Ovary (tissue), 10 donors: ENCODE measurements at regions of chr1 and their contacts with region 1.

Region 1: DNA sequence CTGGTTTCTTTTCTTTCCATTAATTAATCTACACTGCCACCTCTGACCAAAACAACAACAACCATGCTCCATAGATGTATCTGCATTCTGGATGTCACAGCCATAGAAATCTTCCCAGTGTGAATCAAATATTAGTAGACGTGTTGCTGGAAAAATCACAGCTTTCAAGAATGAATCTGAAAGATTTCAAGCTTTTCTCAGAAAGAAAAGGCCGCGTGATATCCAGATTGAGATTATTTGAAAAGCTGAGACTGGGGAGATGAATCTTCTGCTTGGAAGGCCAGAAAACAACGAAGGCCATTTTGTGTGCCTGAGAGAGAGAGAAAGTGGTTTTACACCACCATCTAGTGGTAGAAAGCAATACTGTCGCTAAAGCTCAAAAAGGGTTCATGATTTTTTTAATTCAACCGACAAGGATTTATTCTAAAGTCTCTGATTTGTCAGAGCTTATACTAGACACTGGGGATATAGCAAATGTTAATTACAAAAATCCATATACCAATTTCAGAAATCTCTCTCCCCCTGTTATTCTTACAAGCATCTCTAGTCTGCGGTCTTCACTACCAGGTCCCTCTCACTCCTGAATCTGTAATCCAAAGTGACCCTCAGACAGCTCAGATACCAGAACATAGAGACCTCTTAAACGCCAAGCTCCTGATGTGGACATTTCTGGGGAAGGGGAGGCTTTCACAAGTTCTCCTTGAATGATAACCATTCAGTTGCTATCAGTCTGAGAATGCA is 87.5 kb upstream of the SGIP1 start:
- DNase-seq: no peak
- H3K4me3 ChIP-seq: no peak overlapping the region
- H3K27ac ChIP-seq: no peak overlapping the region
- H3K4me1 ChIP-seq: no peaks in the 10 kb centered on the region
- H3K27me3 ChIP-seq: no peaks in the 10 kb centered on the region
- CTCF ChIP-seq: peak; percentile 70 to 81 (median 78)
- EP300 ChIP-seq: no peak
- POLR2A ChIP-seq: no peak

Region 2: DNA sequence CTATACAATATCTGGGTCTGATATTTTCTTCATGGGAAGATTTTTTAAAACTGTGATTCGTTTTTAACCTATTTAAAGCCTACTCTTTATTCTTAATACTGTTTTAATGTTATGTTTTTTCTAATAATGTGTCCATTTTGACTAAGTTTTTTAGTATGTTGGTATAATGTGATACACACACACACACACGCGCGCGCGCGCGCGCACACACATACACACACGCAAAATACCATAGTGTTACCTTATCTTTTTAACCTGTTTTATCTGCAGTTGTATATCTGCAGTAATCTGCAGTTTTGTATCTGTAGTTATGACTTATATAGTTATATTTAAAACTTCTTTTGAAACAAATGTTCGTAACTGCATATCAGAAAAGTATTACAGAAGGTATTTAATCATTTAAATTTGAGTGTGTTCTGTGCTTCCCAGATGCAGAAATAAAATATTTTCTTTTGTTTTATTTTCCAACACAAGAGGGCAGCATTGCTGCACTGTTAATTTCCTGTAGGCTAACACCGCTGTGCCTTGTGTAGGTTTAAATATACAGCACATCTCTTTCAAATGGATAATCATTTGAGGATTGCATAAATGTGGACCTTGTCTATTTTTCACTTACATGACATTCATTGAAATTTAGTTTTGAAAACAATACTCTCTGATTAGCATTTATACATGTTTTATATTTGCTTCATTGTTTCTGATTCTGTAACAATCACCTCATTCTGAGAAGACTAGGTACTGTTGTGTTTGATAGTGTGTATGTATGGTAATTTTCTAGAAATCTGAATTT is 487.7 kb before region 1 on chr1:
- intact Hi-C with region 1: loop called in 2 of 4 experiments (anchors 5 to 10 kb)
- DNase-seq: no peak
- H3K4me3 ChIP-seq: no peak overlapping the region
- H3K27ac ChIP-seq: no peak overlapping the region
- H3K4me1 ChIP-seq: no peaks in the 10 kb centered on the region
- H3K27me3 ChIP-seq: no peaks in the 10 kb centered on the region
- CTCF ChIP-seq: peak; percentile 30 to 74 (median 56)
- EP300 ChIP-seq: no peak
- POLR2A ChIP-seq: no peak

Region 3: GRCh38 chr1:66253330-66253921 is 193.0 kb before region 1 on chr1:
- intact Hi-C with region 1: loop called (anchors 5 kb)
- DNase-seq: no peak
- H3K4me3 ChIP-seq: no peak overlapping the region
- H3K27ac ChIP-seq: no peak overlapping the region
- H3K4me1 ChIP-seq: no peaks in the 10 kb centered on the region
- H3K27me3 ChIP-seq: no peaks in the 10 kb centered on the region
- CTCF ChIP-seq: peak; percentile 22 to 84 (median 71)
- EP300 ChIP-seq: no peak
- POLR2A ChIP-seq: no peak